Natural killer cell (primary cell): ENCODE measurements at regions of chr9 and their contacts with region 1.

Region 1: DNA sequence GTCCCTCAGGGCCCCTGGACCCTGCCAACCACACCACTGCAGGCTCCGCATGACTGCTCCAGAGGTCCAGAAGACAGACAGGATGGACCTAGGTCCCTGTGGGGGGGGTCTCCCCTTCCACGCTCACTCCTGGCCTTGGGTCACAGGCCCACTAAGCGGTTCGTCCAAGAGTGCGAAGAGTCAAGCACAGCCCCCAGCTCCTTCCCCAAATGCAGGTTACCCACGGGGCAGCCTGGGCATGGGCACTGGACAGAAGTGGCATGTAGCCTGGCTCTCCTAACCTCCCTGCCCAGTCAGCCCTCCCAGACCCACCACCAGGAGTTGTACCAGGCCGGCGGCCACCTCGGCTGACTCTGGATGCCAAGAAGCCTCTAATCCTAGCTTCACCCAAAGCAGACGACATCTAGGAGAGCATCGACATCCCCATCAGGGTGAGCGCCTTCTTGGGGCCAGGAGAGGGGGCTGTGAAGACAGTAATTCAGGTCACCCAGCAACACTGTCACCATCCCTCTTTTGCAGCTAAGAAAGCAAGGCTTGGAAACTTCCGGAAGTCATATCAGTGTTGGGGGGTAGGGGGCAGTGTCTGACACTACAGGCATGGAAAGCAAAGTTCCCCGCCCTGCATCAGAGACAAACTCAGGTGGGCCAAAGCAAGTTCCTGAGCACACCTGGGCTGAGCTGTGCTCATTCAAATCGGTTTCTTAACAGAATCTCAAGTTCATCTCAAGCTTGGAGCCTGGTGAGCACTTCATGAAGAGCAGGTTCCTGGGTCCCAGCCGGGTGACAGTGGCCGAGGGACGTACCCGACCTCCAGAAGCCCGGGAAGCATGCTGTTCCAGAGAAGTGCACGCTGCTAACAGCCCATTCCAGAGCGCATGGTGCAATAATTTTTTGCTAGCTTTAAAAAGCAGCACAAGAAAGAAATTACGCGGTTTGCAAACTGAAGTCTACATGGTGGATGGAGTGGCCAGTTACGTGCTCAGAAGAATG is 68.7 kb downstream of the SEMA4D start:
- DNase-seq: peak in 1 of 2 donors; percentile 87
- ATAC-seq: peak in 1 of 3 donors; percentile 34
- H3K4me3 ChIP-seq: no peak overlapping the region
- H3K4me3 Mint-ChIP-seq: no peak overlapping the region
- H3K27ac ChIP-seq: no peak overlapping the region
- H3K27ac Mint-ChIP-seq: peak overlapping the region; percentile 84 to 92
- H3K4me1 ChIP-seq: peaks cover 97% of the 10 kb centered on the region
- H3K4me1 Mint-ChIP-seq: peaks cover 72 to 83% of the 10 kb centered on the region in 2 donors
- H3K27me3 ChIP-seq: no peaks in the 10 kb centered on the region
- H3K27me3 Mint-ChIP-seq: no peaks in the 10 kb centered on the region
- CTCF ChIP-seq: peak; percentile 28

Region 2: GRCh38 chr9:89405826-89406225 is 23.4 kb before region 1 on chr9:
- intact Hi-C with region 1: loop called (anchors 2 kb)
- DNase-seq: no peak
- ATAC-seq: peak; percentile 13 to 48 (median 31)
- H3K4me3 ChIP-seq: no peak overlapping the region
- H3K4me3 Mint-ChIP-seq: peak overlapping the region; percentile 71
- H3K27ac ChIP-seq: peak overlapping the region; percentile 32
- H3K27ac Mint-ChIP-seq: peak overlapping the region; percentile 90 to 91
- H3K4me1 ChIP-seq: peaks cover 76% of the 10 kb centered on the region
- H3K4me1 Mint-ChIP-seq: peaks cover 74 to 79% of the 10 kb centered on the region in 2 donors
- H3K27me3 ChIP-seq: no peaks in the 10 kb centered on the region
- H3K27me3 Mint-ChIP-seq: no peaks in the 10 kb centered on the region
- CTCF ChIP-seq: no peak

Region 3: DNA sequence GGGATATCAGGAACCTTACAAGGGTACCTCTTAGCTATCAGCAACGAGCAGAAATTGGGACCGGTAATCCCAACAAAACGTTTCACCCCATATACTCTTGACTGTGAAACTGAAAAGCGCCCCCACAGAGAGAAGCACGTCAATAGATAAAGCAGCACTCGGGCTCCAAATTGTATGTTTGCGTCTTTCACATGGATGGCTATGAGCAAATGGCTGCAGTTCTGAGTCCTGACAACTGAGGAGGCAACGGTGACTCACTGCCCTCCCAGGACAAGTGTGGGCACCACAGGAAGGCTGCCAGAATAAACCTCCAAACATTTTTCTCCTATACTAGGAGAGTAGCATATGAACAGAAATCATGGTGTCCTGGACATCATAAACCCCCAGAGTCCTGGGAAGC is 32.1 kb after region 1 on chr9:
- intact Hi-C with region 1: loop called (anchors 5 kb)
- DNase-seq: peak in 1 of 2 donors; percentile 44
- ATAC-seq: no peak
- H3K4me3 ChIP-seq: no peak overlapping the region
- H3K4me3 Mint-ChIP-seq: no peak overlapping the region
- H3K27ac ChIP-seq: no peak overlapping the region
- H3K27ac Mint-ChIP-seq: no peak overlapping the region
- H3K4me1 ChIP-seq: peaks cover 93% of the 10 kb centered on the region
- H3K4me1 Mint-ChIP-seq: peaks cover 81 to 84% of the 10 kb centered on the region in 2 donors
- H3K27me3 ChIP-seq: no peaks in the 10 kb centered on the region
- H3K27me3 Mint-ChIP-seq: no peaks in the 10 kb centered on the region
- CTCF ChIP-seq: no peak

Region 4: GRCh38 chr9:89522261-89522958 is 93.2 kb after region 1 on chr9:
- intact Hi-C with region 1: loop called (anchors 1 kb)
- DNase-seq: peak; percentile 59 to 93
- ATAC-seq: peak; percentile 72 to 88 (median 85)
- H3K4me3 ChIP-seq: no peak overlapping the region
- H3K4me3 Mint-ChIP-seq: peak overlapping the region; percentile 85
- H3K27ac ChIP-seq: peak overlapping the region; percentile 83
- H3K27ac Mint-ChIP-seq: peak overlapping the region; percentile 91 to 95
- H3K4me1 ChIP-seq: peaks cover 93% of the 10 kb centered on the region
- H3K4me1 Mint-ChIP-seq: peaks cover 77 to 85% of the 10 kb centered on the region in 2 donors
- H3K27me3 ChIP-seq: no peaks in the 10 kb centered on the region
- H3K27me3 Mint-ChIP-seq: no peaks in the 10 kb centered on the region
- CTCF ChIP-seq: no peak